Cardiac septum (tissue), 1 donor: ENCODE measurements at regions of chr19 and their contacts with region 1.

Region 1: GRCh38 chr19:36331353-36332228 is 47.4 kb downstream of the ZFP14 start:
- DNase-seq: peak; percentile 89

Region 2: DNA sequence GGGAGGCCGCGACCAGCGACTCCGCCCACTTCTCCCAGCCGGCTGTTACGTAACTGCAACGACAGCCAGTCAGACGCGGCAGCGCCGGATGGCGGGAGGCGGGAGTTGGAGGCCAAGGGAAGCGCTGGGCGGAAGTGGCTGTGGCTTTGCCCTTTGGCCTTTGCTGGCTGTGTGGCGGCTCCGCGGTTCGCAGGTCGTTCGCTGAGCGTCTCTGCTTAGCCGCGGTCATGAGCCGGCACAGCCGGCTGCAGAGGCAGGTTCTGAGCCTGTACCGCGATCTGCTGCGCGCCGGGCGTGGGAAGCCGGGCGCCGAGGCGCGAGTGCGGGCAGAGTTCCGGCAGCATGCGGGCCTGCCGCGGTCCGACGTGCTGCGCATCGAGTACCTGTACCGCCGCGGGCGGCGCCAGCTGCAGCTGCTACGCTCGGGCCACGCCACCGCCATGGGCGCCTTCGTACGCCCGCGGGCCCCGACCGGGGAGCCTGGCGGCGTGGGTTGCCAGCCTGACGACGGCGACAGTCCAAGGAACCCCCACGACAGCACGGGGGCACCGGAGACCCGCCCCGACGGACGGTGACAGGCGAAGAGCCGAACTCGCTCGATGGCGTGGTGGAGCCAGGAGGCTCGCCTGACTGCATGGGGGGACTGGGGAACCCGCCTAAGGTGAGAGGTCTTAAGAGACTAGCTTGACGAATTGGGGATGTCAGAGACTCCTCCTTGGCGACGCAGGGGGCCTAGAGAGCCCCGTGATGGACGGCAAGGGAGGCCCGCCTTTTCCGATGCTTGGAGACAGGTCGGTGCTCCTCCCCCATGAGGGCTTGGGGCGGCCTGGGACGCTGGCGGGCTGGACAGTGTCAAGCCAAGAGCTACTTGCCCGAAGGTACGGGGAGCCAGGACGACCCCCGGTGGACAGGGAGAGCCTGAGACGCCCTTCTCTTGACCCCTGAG is 336.3 kb before region 1 on chr19 and contains the start of gene SDHAF1:
- intact Hi-C with region 1: loop called (anchors 5 kb)
- DNase-seq: peak; percentile 99
- total RNA-seq, gene SDHAF1: 11.0 TPM

Region 3: DNA sequence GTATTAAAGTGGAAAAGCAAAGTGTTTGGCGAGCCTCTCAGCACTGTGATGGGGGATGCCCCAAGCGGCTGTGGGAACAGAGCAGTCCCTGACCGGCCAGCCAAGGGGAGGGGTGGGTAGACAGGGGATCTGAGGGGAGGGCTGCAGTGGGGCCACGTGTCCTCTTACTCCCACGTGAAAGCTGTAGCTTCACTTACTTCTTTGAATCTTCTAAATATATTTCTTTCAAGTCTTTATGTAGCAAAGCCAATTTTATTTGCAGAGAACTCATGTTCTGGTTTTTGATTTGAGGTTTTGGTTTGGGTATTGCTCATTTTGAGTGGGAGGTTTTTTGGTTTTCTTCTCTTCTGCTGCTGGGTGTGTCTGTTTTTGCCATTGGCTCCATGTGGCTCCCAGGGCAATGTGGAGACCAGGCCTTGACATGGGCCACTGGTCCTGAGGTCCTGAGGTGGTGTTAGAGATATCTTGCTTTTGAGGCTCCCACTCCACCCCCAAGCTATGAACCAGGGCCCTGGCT is 238.4 kb before region 1 on chr19:
- intact Hi-C with region 1: no loop called
- DNase-seq: no peak

Region 4: GRCh38 chr19:36257520-36257876 is 74.1 kb before region 1 on chr19:
- intact Hi-C with region 1: no loop called
- DNase-seq: no peak

Region 5: GRCh38 chr19:36363845-36364244 is 32.3 kb after region 1 on chr19:
- intact Hi-C with region 1: no loop called
- DNase-seq: no peak

Region 6: GRCh38 chr19:36392916-36393673 is 61.5 kb after region 1 on chr19:
- intact Hi-C with region 1: no loop called
- DNase-seq: no peak